Lower leg skin (tissue), 4 donors: ENCODE measurements at regions of chr17 and their contacts with region 1.

Region 1: DNA sequence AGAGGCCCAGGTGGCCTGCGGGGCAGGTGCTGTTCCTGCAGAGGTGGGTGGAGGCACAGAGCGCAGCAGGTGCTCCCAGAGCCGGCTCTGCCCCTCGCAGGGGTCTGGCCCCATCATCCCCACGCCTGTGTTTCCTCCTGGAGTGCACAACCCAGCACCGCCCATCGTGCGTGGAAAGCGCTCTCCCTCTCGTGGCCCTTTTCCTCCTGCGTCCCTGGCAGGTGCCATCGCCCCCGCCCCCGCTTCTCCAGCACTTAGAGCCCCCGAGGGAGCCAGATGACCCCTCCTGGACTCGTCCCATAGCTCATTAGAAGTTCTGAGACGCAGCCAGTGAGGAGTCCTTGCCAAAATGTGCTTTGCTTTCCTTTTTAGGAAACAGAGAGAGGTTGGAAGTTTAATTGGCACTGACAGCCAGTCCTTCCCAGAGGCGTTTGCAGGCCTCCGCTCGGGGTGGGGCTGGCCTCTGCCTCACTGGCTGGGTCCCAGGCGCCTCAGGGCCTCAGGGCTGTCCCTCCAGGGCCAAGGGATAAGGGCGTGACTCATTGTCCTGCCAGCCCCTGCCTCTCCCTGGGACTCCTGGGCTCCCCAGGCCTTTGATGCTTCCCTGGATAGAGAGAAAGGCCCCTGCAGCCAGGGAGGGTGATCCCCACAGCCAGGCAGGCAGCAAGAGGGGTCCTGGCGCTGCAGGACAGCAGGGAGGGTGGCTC is 32.2 kb upstream of the CHMP6 start:
- DNase-seq: peak; percentile 64 to 91
- H3K4me3 ChIP-seq: no peak overlapping the region
- CTCF ChIP-seq: no peak
- POLR2A ChIP-seq: no peak

Region 2: GRCh38 chr17:80491478-80492342 is 467.8 kb before region 1 on chr17:
- intact Hi-C with region 1: no loop called
- DNase-seq: no peak
- H3K4me3 ChIP-seq: no peak overlapping the region
- CTCF ChIP-seq: no peak
- POLR2A ChIP-seq: no peak

Region 3: GRCh38 chr17:80866147-80866793 is 93.2 kb before region 1 on chr17:
- intact Hi-C with region 1: loop called (anchors 10 kb)
- DNase-seq: peak; percentile 63 to 91
- H3K4me3 ChIP-seq: no peak overlapping the region
- CTCF ChIP-seq: peak in 1 of 3 donors; percentile 19
- POLR2A ChIP-seq: no peak

Region 4: DNA sequence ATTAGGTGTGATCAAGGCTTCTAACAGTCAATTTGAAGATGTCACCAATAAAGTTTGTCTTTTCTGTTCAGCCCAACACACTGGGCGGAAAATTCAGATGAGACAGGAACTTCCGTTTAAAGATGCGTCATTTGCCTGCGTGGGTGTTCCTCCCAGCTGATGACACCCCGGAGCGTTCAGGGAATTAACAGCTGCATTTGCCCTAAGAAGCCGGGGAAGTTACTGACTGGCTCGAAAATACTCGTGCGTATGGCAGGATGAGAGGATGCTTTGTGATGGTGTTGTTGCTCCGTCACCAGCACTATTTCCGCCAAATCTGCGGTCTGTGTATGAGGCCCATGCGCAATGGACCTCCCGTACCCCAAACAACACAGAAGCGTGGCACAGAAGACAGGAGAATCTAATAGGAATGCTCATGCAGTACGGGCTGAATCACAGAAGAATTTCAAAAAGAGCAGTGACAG is 193.9 kb after region 1 on chr17:
- intact Hi-C with region 1: no loop called
- DNase-seq: no peak
- H3K4me3 ChIP-seq: no peak overlapping the region
- CTCF ChIP-seq: no peak
- POLR2A ChIP-seq: no peak

Region 5: GRCh38 chr17:81302861-81303333 is 343.4 kb after region 1 on chr17:
- intact Hi-C with region 1: no loop called
- DNase-seq: no peak
- H3K4me3 ChIP-seq: no peak overlapping the region
- CTCF ChIP-seq: no peak
- POLR2A ChIP-seq: no peak